ENCODE measurements at regions of chr11 and their contacts with region 1.

Region 1: DNA sequence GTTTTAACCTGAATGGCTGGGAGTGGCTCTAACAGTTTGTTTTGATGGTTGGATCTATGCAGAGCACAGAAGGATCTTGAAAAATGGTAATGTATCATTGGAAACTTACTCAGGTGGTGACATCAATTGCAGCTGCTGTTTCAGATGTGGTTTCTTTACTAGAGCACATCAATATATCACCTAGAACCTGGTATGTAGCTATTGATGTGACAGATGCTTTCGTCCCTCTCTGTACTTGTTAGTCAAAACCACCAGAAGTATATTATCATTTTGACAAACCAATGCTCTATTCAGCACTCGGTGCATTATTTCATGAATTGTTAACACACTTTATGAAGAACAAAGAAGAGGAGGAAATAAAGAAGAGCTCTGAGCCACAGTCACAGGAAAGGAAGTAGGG is 26.6 kb upstream of the SCN3B start:
- DNase-seq: peak; percentile 36
- ATAC-seq: peak; percentile 98
- H3K4me3 Mint-ChIP-seq: no peak overlapping the region
- H3K27ac Mint-ChIP-seq: peak overlapping the region; percentile 55
- H3K4me1 Mint-ChIP-seq: peaks cover 17% of the 10 kb centered on the region
- H3K27me3 Mint-ChIP-seq: no peaks in the 10 kb centered on the region

Region 2: DNA sequence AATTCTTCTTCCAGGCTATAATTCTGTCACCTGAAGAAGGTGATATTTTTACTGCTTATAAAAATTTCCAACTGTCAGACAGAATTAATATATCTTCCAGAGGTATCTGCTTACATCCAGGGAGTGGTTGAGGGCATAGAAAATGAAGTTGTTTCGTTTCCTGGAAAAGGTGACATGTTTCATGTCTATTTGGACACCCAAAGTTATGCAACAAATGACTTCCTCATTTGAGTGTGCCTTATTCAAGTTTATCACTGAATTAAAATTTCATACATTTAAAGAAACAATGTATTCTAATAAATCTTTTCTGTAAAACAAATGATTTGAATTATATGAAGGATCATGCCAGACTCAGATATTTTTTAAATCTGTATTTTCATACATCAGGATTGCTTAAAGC is 259.4 kb before region 1 on chr11:
- CTCF ChIA-PET with region 1: no interaction called
- POLR2A ChIA-PET with region 1: no interaction called
- intact Hi-C with region 1: no loop called
- DNase-seq: no peak
- ATAC-seq: no peak
- H3K4me3 Mint-ChIP-seq: no peak overlapping the region
- H3K27ac Mint-ChIP-seq: no peak overlapping the region
- H3K4me1 Mint-ChIP-seq: peaks cover 2% of the 10 kb centered on the region
- H3K27me3 Mint-ChIP-seq: peaks cover 16% of the 10 kb centered on the region

Region 3: DNA sequence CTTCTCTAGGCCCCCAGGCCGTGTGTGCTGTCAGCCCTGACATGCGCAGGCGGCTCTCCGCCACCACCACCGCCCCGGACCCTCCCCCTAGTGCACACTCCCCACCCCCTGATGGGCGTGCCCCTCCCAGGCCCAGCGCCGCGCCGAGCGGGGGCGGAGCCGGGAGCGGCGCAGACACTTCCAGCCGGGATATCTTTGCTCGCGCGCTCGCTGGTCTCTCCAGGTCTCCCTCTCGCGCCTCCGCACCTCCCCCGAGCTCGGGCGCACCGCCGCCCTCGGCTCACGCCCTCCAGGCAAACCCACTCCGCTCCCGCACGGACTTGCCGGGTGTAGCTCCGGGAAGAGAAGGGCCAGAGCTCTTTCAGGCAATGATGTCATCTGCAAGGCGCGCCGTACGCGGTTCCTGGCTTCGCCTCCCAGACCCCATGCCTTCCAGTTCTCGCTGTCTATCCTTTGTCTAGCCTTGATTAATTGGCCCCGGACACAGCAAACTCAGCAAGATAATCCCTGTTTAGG is 26.4 kb before region 1 on chr11 and contains the start of gene SCN3B:
- CTCF ChIA-PET with region 1: interaction called, 3 read pairs
- POLR2A ChIA-PET with region 1: no interaction called
- intact Hi-C with region 1: loop called in 1 of 2 experiments (anchors 2 kb)
- DNase-seq: peak; percentile 41
- ATAC-seq: peak; percentile 80
- H3K4me3 Mint-ChIP-seq: peak within 1 kb of the TSS; percentile 52
- H3K27ac Mint-ChIP-seq: no peak within 1 kb of the TSS
- H3K4me1 Mint-ChIP-seq: peaks cover 11% of the 10 kb centered on the region
- H3K27me3 Mint-ChIP-seq: peaks cover 42% of the 10 kb centered on the region
- total RNA-seq, gene SCN3B: not detected

Measured in activated CD4-positive, alpha-beta T cell treated with anti-CD3 and anti-CD28 coated beads for 36 hours (primary cell).